Activated T-helper 2 cell treated with anti-CD3 and anti-CD28 coated beads, Interferon-gamma antibody, Interleukin-2, Interleukin-4, amounts not matched to agents 10 μg/mL and 5 μg/mL and 100 μg/mL, durations not matched to agents 14 hours and 24 hours and 36 hours (primary cell): ENCODE measurements at regions of chr11 and their contacts with region 1.

Region 1: DNA sequence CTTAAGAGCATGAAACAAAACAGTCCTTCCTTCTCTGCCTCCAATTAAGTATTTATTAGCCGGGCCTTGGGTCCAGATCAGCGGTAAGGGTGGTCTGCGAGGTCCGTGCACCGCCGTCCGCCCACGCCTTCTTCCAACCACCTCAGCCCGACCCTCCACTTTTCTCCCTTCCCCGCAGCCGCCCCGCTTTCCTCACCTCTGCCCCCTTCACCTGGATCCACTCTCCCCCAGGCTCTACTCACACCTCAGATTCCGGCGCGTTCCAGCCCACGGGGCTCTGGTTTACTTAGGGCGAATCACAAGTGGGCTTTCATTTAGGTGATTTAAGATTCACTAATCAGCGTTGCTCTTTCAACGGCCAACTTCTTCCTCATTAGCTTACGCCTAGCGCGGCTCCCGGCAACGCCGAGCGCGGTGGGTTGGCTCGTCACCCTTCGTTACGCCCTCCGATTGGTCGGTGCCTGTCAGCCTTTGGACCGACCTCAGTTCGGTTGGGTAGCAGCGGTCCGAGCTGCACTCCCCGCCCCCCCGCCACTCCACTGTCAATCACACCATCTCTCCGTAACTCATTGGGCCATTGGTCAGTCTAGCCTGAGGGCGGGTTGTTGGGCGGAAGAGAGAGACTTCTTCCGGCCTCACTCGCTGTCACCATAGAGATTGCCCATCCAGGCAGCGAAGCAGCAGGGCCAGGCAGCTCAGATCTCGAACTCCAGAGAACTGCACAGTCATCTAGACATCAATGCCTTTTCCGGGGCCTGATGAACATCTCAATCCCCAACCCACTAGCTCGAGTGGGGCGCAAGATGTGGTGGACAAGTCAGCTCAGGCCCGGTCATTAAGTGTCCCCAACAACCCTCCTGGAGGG is at the start of gene TMEM218:
- DNase-seq: peak; percentile 97
- H3K4me3 Mint-ChIP-seq: peak within 1 kb of the TSS; percentile 100
- H3K27ac Mint-ChIP-seq: peak within 1 kb of the TSS; percentile 100
- H3K4me1 Mint-ChIP-seq: peaks cover 22% of the 10 kb centered on the region
- H3K27me3 Mint-ChIP-seq: peaks cover 6% of the 10 kb centered on the region
- total RNA-seq, gene TMEM218: 17.9 and 18.1 TPM in 2 replicates

Region 2: DNA sequence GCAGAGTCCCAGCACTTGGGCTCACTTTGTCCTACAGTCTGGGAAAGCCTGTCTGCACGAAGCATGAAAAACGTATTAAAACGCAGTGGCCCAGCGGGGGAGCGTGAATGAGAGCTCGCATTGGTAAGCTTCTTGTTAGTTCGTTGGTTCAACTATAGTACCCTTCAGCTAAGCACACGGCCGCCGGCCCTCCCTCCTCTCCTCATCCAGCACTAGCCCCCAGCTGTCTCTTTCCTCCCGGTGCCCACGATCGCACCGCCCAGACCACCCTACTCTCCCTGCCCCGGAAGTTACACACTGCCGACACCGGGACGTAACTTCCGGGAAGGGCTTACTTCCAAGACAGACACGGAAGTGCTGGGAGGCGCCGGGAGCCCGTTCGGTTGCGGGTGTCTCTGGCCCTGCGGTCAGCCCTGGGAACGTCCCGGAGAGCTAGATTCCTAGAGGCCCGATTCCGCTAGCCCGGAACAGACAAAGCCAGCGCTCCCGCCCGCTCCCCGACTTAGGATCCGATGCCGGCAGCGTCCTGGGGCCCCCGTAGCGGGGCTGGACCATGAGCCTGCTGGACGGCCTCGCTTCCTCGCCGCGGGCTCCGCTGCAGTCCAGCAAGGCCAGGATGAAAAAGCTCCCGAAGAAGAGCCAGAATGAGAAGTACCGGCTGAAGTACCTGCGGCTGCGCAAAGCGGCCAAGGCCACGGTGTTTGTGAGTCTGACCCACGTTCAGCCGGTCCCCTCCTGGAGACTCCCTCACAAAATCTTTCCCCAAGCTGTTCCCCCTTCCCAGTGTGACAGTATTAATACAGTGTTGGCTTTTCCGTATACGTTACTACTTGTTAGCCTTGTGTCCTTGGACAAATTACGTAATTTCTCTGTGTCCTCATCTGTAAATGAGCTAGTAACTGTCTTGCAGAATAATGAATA is 488.8 kb before region 1 on chr11 and contains the start of gene TBRG1:
- intact Hi-C with region 1: loop called (anchors 5 kb)
- DNase-seq: peak; percentile 78
- H3K4me3 Mint-ChIP-seq: peak within 1 kb of the TSS; percentile 96
- H3K27ac Mint-ChIP-seq: peak within 1 kb of the TSS; percentile 92
- H3K4me1 Mint-ChIP-seq: peaks cover 25% of the 10 kb centered on the region
- H3K27me3 Mint-ChIP-seq: peaks cover 24% of the 10 kb centered on the region
- total RNA-seq, gene TBRG1: 36.1 and 37.4 TPM in 2 replicates

Region 3: GRCh38 chr11:125062931-125063428 is 48.6 kb before region 1 on chr11 and contains the start of gene SLC37A2:
- intact Hi-C with region 1: loop called (anchors 5 kb)
- DNase-seq: peak; percentile 40
- H3K4me3 Mint-ChIP-seq: peak within 1 kb of the TSS; percentile 78
- H3K27ac Mint-ChIP-seq: peak within 1 kb of the TSS; percentile 45
- H3K4me1 Mint-ChIP-seq: peaks cover 7% of the 10 kb centered on the region
- H3K27me3 Mint-ChIP-seq: peaks cover 43% of the 10 kb centered on the region
- total RNA-seq, gene SLC37A2: 0.44 and 0.52 TPM in 2 replicates

Region 4: GRCh38 chr11:125075849-125076317 is 35.7 kb before region 1 on chr11:
- intact Hi-C with region 1: no loop called
- DNase-seq: no peak
- H3K4me3 Mint-ChIP-seq: no peak overlapping the region
- H3K27ac Mint-ChIP-seq: no peak overlapping the region
- H3K4me1 Mint-ChIP-seq: peaks cover 7% of the 10 kb centered on the region
- H3K27me3 Mint-ChIP-seq: no peaks in the 10 kb centered on the region